ENCODE measurements at regions of chr2 and their contacts with region 1.

Region 1: DNA sequence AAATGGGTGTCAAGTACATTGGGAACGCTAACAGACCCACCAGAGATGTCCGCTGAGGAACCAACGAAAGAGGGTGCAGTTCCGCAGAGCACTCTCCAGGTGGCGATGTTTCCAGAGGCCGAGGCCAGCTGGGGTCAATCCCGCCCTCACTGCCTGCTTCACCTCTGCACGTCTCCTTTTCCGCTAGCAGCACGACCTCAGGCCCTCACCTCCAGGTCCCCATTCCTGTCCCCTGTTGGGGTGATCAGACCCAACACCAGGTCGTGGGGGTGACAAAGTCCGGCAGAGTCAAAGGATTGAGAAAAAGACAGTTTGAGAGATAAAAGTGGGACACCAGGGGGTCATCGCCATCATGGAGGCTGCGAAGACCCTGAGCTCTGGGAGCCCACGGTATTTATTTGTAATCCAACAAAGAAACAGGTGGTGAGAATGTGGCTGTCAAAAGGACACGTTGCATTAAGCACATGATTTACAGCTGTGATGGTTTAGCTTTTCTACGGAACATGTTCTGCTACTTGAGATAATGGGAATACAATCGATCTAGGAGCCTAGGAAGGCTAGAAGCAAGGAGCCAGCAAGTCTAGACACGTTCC is 27.3 kb downstream of the ZAP70 start:
- DNase-seq: no peak
- H3K4me3 ChIP-seq: no peak overlapping the region
- H3K27me3 ChIP-seq: no peaks in the 10 kb centered on the region
- CTCF ChIP-seq: peak; percentile 77

Region 2: DNA sequence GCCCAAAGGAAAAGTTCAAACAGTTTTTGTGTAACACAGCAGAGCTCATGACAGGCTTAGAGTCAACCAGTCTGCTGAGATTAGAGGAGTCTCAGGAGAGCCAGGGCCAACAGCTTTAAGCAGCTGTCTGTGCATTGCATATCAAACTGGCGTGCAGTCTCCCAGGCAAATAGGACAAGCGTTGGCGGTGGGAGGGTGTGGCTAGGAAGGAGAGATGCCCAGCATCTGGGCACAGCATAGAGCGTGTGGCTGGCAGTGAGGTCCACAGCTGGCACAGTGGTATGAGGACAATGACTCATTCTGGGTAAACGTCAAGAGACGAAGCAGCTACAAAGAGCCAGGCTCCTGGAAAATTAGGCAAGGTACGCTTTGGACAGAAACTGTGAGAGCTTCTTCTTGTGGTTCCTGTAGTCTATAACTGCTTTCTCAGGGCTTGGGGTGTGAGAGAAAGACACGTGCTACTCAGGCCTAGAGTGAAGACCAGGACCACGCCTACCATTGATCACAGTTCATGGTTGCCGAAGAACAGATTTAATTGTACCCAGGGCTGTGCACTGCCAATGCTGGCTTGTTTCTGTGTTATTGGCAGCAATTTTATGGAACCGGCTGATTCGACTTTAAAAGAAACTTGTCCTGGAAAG is 12.5 kb before region 1 on chr2:
- CTCF ChIA-PET with region 1: interaction called, 28 read pairs
- POLR2A ChIA-PET with region 1: no interaction called
- DNase-seq: no peak
- H3K4me3 ChIP-seq: no peak overlapping the region
- H3K27me3 ChIP-seq: no peaks in the 10 kb centered on the region; the same call in 1 of the 2 replicates
- CTCF ChIP-seq: no peak

Measured in BJ (cell line).